ENCODE measurements at regions of chr7 and their contacts with region 1.

Region 1: DNA sequence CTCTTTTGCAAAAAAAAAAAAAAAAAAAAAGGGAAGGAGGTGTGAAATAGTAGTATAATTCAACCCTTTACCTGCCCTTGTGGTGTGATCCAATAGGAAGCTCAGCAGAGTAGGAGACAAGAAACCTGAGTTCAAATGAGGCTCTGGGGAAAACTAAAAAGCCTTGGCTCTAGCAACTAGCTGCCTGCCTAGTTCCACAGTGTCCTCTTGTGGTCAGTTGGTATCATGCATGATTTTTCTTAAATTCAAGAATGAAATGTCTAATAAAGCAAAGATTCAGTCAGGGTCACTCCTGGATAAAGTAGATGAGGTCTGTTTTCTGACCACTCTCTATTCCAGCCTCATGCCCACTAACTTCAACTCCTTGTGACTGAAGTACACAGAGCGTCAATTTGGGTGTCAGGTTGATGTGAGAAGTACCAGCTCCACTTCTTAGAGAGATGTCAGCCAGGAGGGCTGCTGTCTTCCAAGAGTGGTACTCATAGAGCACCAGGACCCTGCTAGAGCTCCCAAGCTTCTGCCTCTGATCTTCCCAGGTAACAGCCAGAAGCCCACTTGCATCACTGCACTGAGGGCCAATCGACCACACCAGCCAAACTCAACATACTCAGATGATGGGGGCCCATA is 10.5 kb downstream of the LSM5 start:
- DNase-seq: peak in 1 of 2 experiments; percentile 55
- H3K4me3 ChIP-seq: no peak overlapping the region
- H3K27ac ChIP-seq: no peak overlapping the region
- H3K4me1 ChIP-seq: no peaks in the 10 kb centered on the region
- H3K27me3 ChIP-seq: no peaks in the 10 kb centered on the region
- CTCF ChIP-seq: peak in 2 of 3 experiments; percentile 91; a peak in 3 of 4 replicates
- EP300 ChIP-seq: no peak
- POLR2A ChIP-seq: no peak
- RAD21 ChIP-seq: peak; percentile 98

Region 2: GRCh38 chr7:32212321-32212720 is 267.4 kb before region 1 on chr7:
- CTCF ChIA-PET with region 1: interaction called, 25 read pairs
- POLR2A ChIA-PET with region 1: no interaction called
- DNase-seq: peak in 1 of 2 experiments; percentile 20
- H3K4me3 ChIP-seq: no peak overlapping the region
- H3K27ac ChIP-seq: no peak overlapping the region
- H3K4me1 ChIP-seq: no peaks in the 10 kb centered on the region
- H3K27me3 ChIP-seq: no peaks in the 10 kb centered on the region; a peak in 1 of 7 replicates
- CTCF ChIP-seq: no peak
- EP300 ChIP-seq: no peak
- POLR2A ChIP-seq: no peak
- RAD21 ChIP-seq: no peak

Region 3: DNA sequence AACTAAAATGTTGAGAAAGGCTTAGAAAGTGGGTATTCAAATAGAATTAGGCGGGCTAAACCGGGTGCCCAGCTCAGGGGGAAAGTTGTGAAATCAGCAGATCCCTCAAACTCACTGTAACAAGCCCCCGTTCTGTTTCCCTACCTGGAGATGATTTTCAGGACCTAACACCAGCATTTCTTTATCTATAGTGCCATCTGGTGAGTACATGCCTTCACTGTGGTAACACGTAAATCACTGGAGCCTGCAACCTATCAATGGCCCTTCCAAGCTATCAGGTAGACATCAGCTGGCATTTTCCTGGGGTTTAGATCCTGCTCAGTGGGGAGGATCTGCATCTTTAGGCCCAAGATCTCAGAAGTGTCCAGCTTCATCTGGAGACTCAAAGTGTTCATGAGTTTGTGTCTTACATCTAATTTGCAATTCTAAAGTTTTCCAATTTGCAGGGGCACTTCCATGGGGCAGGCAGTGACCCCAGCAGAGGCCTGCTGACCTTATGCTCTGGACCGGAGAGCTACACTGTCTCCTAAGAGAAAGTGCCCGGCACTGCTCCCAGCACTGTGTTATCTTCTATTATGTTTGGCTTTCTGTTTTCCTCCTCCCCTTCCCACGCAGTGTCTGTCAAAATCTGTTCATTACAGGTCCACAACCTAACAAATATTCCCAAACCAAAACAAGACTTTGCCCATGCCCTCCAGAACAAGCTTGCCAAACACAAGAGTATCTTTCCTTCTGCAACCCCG is 122.0 kb before region 1 on chr7:
- CTCF ChIA-PET with region 1: interaction called, 11 read pairs
- POLR2A ChIA-PET with region 1: no interaction called
- DNase-seq: no peak
- H3K4me3 ChIP-seq: no peak overlapping the region
- H3K27ac ChIP-seq: no peak overlapping the region
- H3K4me1 ChIP-seq: no peaks in the 10 kb centered on the region
- H3K27me3 ChIP-seq: no peaks in the 10 kb centered on the region; a peak in 1 of 7 replicates
- CTCF ChIP-seq: peak in 2 of 3 experiments; percentile 66 to 72; a peak in 3 of 4 replicates
- EP300 ChIP-seq: no peak
- POLR2A ChIP-seq: no peak
- RAD21 ChIP-seq: peak; percentile 82 to 88

Region 4: DNA sequence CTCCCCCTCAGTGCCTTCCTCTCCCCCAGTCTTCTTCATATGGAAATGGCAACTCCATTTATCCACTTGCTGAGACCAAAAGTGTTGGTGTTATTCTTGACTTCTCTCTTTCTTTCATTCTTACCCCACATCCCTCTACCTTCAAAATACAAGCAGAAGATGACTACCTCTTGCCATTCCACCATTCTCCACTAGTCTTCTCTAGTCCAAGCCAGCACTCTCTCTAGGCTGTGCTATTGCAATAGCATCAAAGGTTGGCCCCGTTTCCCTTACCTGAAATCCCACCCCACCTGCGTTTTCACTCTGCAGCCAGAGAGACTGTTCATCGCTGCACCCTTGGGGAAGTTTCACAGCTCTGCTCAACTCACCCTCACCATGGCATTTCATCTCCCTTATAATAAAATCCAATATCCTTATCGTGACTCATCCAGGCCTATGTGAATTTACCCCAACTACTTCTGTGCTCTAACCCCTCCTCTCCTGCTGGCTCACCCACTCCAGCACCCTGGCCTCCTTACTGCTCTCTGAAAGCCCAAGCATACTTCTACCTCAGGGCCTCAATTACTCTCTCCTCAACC is 98.6 kb before region 1 on chr7:
- CTCF ChIA-PET with region 1: interaction called, 11 read pairs
- POLR2A ChIA-PET with region 1: no interaction called
- DNase-seq: no peak
- H3K4me3 ChIP-seq: no peak overlapping the region
- H3K27ac ChIP-seq: no peak overlapping the region
- H3K4me1 ChIP-seq: no peaks in the 10 kb centered on the region
- H3K27me3 ChIP-seq: no peaks in the 10 kb centered on the region; a peak in 1 of 7 replicates
- CTCF ChIP-seq: peak in 2 of 3 experiments; percentile 18 to 42; a peak in 2 of 4 replicates
- EP300 ChIP-seq: no peak
- POLR2A ChIP-seq: no peak
- RAD21 ChIP-seq: peak in 1 of 2 experiments; percentile 7; a peak in 1 of 4 replicates

Region 5: DNA sequence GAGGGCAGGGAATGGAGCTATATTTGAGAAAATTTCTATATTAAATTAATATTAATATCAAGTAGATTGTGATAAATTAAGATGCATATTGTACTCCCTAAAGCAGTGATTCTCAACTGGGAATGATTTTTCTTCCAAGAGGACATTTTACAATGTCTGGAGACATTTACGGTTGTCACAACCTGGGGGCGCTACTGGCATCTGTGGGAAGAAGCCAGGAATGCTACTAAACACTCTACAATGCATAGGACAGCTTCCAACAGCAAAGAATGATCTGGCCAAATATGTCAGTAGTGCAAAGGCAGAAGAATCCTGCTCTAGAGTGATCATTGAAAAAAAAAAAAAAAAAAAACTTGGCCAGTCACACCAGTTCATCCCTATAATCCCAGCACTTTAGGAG is 89.5 kb before region 1 on chr7:
- CTCF ChIA-PET with region 1: interaction called, 22 read pairs
- POLR2A ChIA-PET with region 1: no interaction called
- DNase-seq: no peak
- H3K4me3 ChIP-seq: no peak overlapping the region
- H3K27ac ChIP-seq: no peak overlapping the region
- H3K4me1 ChIP-seq: no peaks in the 10 kb centered on the region
- H3K27me3 ChIP-seq: no peaks in the 10 kb centered on the region
- CTCF ChIP-seq: peak; percentile 32 to 67 (median 62)
- EP300 ChIP-seq: no peak
- POLR2A ChIP-seq: no peak
- RAD21 ChIP-seq: peak; percentile 60 to 77

Region 6: GRCh38 chr7:32490127-32490822 is 10.6 kb after region 1 on chr7 and contains the start of gene LSM5:
- CTCF ChIA-PET with region 1: interaction called, 18 read pairs
- POLR2A ChIA-PET with region 1: interaction called, 5 read pairs
- DNase-seq: peak in 1 of 2 experiments; percentile 84
- H3K4me3 ChIP-seq: peak within 1 kb of the TSS; percentile 64 to 97 (median 86)
- H3K27ac ChIP-seq: peak within 1 kb of the TSS; percentile 88
- H3K4me1 ChIP-seq: no peaks in the 10 kb centered on the region; a peak in 1 of 7 replicates
- H3K27me3 ChIP-seq: no peaks in the 10 kb centered on the region
- CTCF ChIP-seq: no peak
- EP300 ChIP-seq: no peak
- POLR2A ChIP-seq: peak in 1 of 2 experiments; percentile 79; a peak in 1 of 3 replicates
- RAD21 ChIP-seq: no peak
- total RNA-seq, gene LSM5: 97.0 and 103 TPM in 2 replicates

Measured in H1 (cell line).